ENCODE measurements at regions of chr2 and their contacts with region 1.

Region 1: GRCh38 chr2:222024932-222025880 is 273.6 kb downstream of the PAX3 start:
- DNase-seq: peak; percentile 17
- CTCF ChIP-seq: peak; percentile 74

Region 2: DNA sequence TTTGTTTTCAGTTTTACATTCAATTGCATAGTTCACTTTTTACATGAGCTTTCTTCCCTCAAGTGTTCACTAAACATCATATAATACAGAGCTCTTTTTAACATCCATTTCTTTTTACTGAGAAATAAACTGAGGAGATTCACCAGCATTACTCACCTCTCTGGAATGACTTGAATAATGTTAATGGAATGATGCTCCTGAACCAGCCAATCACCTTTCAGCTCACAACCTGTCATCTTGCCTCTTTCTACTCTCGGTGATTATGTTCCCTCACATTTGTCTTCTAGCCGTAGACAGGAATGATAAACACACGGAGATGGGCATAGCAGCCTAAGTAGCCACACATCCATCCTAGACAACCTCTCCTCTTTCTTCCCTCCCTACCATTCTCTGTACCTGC is 28.1 kb before region 1 on chr2:
- CTCF ChIA-PET with region 1: interaction called, 10 read pairs
- POLR2A ChIA-PET with region 1: no interaction called
- DNase-seq: no peak
- CTCF ChIP-seq: no peak

Region 3: DNA sequence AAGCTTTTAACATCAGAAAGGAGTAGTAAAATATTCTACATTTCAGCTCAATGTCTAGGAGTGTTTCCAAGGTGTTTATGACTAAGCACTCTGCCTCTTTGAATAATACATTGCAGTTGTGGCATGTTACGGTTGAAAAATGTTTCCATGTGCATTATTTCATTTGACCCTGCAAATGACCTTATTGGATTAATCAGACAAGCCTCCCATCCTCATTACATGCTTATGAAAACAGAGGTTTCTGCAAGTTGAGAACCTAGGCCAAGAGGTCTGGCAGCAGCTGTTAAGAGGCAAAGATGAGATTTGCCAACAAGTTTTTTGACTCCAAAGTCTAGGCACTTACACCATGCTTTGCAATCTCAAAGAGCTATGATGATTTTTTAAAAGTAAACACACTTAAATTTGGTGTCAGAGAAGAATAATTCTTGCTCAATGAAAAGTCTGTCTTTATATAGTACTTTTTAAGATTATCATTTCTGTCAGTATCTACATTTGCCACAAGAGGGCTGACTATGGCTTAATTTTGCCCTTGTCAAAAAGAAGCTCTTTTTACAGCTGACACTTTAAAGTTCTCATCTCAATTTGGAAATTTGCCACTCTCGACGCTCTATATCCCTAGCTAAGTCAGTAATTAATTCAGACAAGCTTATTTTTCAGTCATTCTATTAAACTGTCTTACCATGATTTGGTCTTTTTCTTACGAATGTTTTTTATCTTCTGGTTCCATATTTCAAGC is 13.0 kb after region 1 on chr2:
- CTCF ChIA-PET with region 1: interaction called, 19 read pairs
- POLR2A ChIA-PET with region 1: no interaction called
- DNase-seq: no peak
- CTCF ChIP-seq: peak; percentile 33

Region 4: GRCh38 chr2:222176890-222177289 is 151.7 kb after region 1 on chr2:
- CTCF ChIA-PET with region 1: no interaction called
- POLR2A ChIA-PET with region 1: no interaction called
- DNase-seq: no peak
- CTCF ChIP-seq: no peak